AG04449 (cell line): ENCODE measurements at regions of chr3 and their contacts with region 1.

Region 1: DNA sequence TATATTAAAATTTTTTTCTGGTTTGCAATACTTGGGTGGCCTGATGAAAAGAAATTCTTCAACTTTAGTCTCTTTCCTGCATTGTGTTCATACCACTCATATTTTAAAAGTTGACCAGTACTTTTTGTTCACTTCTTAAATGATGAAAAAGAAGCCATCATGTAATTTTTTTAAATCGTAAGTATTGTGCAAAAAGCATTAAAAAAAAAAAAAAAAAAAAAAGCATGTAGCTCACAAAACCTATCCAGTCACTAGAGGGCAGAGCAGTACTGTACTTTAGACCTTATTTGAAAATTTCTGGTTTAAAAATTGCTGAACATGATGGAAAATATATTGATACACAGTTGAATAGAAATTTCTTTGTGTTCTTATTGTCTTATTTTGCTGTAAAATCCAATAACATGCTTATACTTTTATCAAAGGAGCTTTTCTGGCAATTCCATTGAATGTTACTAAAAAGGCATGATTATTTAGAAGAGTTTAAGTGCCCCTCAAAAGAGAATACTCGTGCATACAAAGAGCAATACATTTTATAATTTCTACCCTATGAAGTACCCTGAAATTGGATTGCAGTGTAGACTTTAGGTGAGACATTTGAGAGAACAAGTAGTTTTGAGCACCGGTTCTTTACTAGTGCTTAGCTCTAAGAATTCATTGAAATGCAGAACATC is 137.7 kb downstream of the BBX start:
- DNase-seq: peak; percentile 53
- H3K4me3 ChIP-seq: no peak overlapping the region
- CTCF ChIP-seq: peak; percentile 37

Region 2: DNA sequence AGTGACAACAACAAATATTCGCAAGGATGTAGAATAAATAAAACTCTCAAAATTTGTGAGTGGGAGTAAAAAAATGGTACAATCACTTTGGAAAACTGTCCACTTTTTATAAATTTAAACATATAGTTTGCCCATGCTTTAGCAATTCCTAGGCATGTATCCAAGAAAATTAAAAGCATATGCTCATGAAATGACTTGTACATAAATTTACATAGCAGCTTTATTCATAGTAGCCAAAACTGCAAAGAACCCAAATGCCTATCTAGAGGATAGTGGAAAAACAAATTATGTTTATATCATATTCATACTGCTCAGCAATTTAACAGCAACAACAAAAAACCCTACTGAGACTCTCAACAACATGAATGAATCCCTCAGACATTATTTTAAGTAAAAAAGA is 646.8 kb before region 1 on chr3:
- CTCF ChIA-PET with region 1: no interaction called
- POLR2A ChIA-PET with region 1: no interaction called
- DNase-seq: no peak
- H3K4me3 ChIP-seq: no peak overlapping the region
- CTCF ChIP-seq: no peak

Region 3: GRCh38 chr3:107643038-107643883 is 17.2 kb before region 1 on chr3:
- CTCF ChIA-PET with region 1: interaction called, 25 read pairs
- POLR2A ChIA-PET with region 1: no interaction called
- DNase-seq: no peak
- H3K4me3 ChIP-seq: no peak overlapping the region
- CTCF ChIP-seq: no peak

Region 4: GRCh38 chr3:107676469-107677309 is 16.2 kb after region 1 on chr3:
- CTCF ChIA-PET with region 1: interaction called, 172 read pairs
- POLR2A ChIA-PET with region 1: no interaction called
- DNase-seq: no peak
- H3K4me3 ChIP-seq: no peak overlapping the region
- CTCF ChIP-seq: peak; percentile 29

Region 5: DNA sequence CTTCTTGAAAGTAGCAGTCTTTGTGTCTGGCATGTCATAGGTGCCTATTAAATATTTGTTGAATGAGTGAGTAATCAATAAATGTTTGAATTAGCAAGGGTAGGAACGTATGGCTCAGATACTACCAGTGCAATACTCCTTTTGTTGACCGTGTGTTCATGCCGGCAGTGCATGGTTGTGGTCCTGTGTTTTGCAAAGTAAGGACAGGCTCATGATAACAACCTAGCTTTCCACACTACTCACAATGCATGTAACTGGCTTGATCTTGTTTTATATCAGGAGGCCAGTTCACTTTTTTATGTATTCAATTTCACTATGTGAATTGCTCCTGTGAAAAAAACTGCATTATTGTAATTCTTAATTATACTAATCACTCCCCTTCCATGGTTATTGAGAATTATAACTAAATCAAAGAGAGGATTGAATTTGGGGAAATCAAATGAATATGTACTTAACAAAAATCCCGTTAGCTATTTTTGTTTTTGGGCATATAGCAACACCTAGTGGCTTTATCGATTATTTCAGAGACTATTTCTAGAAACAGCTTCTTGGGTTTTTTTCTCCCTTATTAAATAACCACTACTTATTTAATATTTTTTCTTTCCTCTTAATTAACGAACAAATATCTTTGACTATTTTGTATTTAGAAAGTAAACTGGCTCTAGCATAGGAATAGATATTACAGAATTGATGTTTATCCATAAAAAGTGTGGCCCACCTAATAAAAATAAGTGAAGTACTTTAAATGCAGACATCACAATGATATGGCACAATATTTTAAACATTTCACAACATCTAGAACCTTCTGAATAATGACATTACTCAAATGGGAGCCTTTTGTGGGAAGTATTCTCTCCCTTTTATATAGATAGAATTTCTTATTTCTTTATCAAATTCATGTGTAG is 80.8 kb after region 1 on chr3:
- CTCF ChIA-PET with region 1: interaction called, 105 read pairs
- POLR2A ChIA-PET with region 1: no interaction called
- DNase-seq: no peak
- H3K4me3 ChIP-seq: no peak overlapping the region
- CTCF ChIP-seq: peak; percentile 13

Region 6: GRCh38 chr3:107846279-107846852 is 185.9 kb after region 1 on chr3:
- CTCF ChIA-PET with region 1: interaction called, 14 read pairs
- POLR2A ChIA-PET with region 1: no interaction called
- DNase-seq: no peak
- H3K4me3 ChIP-seq: no peak overlapping the region
- CTCF ChIP-seq: peak; percentile 82